Motor neuron (in vitro differentiated cells): ENCODE measurements at regions of chr22 and their contacts with region 1.

Region 1: DNA sequence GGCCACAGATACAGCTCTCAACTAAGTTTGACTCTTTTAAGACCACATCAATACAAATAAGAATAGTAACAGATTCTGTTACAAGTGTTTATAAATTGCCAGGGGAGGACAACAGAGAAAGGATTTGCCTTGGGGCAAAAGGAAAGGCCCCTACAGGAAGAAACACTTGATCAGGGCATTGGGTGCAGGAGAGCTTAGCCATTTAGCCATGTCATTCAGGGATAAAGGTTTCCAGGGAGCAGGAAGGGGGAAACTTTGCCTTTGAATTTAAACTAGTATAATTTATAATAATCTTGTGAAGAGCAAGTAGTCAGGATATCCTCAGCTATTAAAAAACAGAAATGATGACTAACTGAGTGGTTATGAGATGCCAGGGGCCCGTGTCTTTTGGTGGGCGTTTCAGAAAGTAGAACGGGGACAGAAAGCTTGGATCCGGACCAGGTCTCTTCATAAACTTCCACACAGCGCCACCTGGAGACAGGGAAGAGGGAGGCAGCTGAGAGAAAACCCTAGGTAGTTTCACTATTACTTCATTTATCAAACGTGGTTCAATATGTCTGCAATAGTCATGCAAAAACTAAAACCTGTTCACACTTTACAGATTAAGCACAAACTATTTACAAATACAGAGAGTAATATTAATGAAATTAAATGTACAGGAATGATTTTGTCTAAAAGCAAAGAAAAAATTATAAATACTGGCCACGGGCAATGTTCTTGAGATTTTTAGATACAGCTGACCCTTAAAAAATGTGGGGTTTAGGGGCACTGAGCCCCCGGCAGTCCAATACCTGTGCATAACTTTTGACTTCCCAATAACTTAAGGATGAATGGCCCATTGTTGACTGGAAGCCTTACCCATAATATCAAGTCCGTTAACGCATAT is 11.0 kb upstream of the SLC5A4 start:
- ATAC-seq: peak; percentile 56 to 83 (median 69)
- H3K4me3 ChIP-seq: no peak overlapping the region
- H3K27ac ChIP-seq: no peak overlapping the region
- H3K4me1 ChIP-seq: no peaks in the 10 kb centered on the region

Region 2: DNA sequence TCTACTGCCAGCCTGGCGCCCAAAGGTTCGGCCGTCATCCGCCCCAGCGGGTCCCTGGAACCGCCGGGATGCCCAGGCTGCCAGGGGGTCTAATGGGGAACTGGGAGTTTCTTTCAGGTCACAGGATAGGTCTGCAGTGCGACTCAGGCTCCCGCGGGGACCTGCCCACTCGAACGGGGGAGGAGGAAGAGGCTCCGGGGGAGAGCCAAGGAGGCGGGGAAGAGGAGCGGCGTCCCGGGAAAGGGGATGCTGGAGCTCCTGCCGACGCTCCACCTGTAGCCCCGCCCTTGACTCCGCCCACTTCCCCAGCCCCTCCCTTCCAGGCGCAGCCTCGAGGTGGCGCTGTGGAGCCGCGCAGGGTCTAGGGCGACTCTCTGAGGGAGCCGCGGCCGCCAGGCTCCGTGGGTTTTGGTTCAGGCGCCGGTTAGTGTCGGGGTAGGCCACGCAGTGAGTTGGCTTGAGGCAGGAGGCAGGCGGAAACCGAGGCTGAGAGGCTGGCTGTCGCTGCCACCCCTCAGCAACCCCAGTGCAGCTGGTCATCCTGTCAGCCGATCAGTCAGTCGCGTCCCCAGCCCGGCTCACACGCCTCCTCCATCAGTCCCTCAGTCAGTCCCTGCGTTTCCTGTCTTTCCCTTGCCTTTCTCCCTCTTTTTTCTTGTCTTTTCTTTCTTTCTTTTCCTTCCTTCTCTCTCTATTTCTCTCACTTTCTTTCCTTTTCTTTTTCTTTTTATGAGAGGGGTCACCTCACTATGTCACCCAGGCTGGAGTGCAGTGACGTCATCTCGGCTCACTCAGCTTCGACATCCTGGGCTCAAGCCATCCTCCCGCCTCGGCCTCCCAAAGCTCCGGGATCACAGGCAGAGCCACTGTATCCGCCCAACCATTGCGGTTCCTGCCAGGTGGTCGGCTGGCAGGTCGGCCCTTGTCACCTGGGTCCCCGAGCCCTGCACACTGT is 295.4 kb before region 1 on chr22:
- in situ Hi-C with region 1: loop called in 1 of 9 experiments (anchors 10 kb)
- ATAC-seq: peak; percentile 85 to 94 (median 88)
- H3K4me3 ChIP-seq: peak overlapping the region; percentile 31 to 48 (median 37)
- H3K27ac ChIP-seq: no peak overlapping the region
- H3K4me1 ChIP-seq: no peaks in the 10 kb centered on the region

Region 3: GRCh38 chr22:32144496-32145274 is 121.4 kb before region 1 on chr22:
- in situ Hi-C with region 1: loop called in 1 of 9 experiments (anchors 25 kb)
- ATAC-seq: peak in 1 of 8 experiments; percentile 19
- H3K4me3 ChIP-seq: no peak overlapping the region
- H3K27ac ChIP-seq: no peak overlapping the region
- H3K4me1 ChIP-seq: no peaks in the 10 kb centered on the region

Region 4: GRCh38 chr22:32158712-32159533 is 107.2 kb before region 1 on chr22 and contains the start of gene C22orf42:
- in situ Hi-C with region 1: no loop called
- ATAC-seq: peak in 5 of 8 experiments; percentile 78 to 91 (median 88)
- H3K4me3 ChIP-seq: no peak within 1 kb of the TSS
- H3K27ac ChIP-seq: no peak within 1 kb of the TSS
- H3K4me1 ChIP-seq: peaks cover 0 to 4% of the 10 kb centered on the region in 2 donors
- total RNA-seq, gene C22orf42: 0.71 to 5.2 (median 3.0) TPM in 5 of 8 experiments, not detected in the others

Region 5: DNA sequence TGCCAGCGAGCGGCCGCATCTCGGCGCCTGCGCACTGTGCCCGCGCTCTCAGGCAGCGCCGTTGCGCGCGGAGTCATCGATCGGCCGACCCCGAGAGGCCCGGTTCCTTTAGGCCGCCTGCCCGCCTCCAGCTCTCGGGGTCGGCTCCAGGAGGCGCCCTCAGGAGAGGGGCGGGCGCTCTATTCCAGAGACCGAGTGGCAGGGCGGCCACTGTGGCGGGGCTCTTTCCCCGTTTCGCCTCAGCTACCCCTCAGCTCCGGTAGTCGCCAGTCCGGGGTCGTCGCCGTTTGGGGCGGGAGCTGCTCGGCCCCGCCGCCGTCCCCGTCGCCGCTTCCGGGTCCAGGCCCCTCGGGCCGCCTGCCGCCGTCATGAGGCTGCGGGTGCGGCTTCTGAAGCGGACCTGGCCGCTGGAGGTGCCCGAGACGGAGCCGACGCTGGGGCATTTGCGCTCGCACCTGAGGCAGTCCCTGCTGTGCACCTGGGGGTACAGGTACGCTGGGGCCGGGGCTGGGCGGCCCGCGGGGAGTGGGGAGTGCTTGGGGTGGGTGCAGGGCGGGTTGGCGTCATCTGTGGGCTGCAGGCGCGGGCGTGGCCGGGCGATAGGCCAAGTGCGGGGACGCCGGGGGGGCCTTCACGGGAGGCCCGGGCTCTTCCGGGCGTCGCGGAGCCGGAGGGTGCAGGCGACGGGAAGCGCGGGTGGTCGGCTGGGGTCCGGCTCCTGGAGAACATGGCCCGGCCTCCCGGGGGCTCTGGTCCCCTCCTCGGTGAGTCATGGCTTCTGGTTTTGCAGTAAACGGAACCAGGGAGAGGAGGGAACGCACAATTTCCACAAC is 208.7 kb after region 1 on chr22 and contains the start of gene FBXO7:
- in situ Hi-C with region 1: loop called in 1 of 9 experiments (anchors 25 kb)
- ATAC-seq: peak; percentile 64 to 88 (median 78)
- H3K4me3 ChIP-seq: peak within 1 kb of the TSS; percentile 68 to 92 (median 75)
- H3K27ac ChIP-seq: peak within 1 kb of the TSS; percentile 87 to 93
- H3K4me1 ChIP-seq: peaks cover 12 to 22% of the 10 kb centered on the region in 2 donors
- total RNA-seq, gene FBXO7: 39.8 to 100 (median 60.2) TPM